Caki2 (cell line): ENCODE measurements at regions of chr1 and their contacts with region 1.

Region 1: GRCh38 chr1:27136998-27137542 is 17.9 kb downstream of the SLC9A1 start:
- DNase-seq: no peak

Region 2: GRCh38 chr1:27234049-27234882 is 97.2 kb after region 1 on chr1 and contains the start of gene WDTC1:
- in situ Hi-C with region 1: loop called (anchors 25 kb)
- DNase-seq: peak; percentile 96
- total RNA-seq, gene WDTC1: 7.0 and 11.6 TPM in 2 replicates